CD4-positive, alpha-beta T cell (primary cell): ENCODE measurements at regions of chr1 and their contacts with region 1.

Region 1: GRCh38 chr1:65419681-65420589 is 533 bp upstream of the LEPR start:
- DNase-seq: peak; percentile 98 to 99 (median 99)
- ATAC-seq: peak; percentile 93
- H3K4me3 ChIP-seq: peak overlapping the region; percentile 86
- H3K4me3 Mint-ChIP-seq: no peak overlapping the region
- H3K27ac ChIP-seq: peak overlapping the region; percentile 64 to 69
- H3K27ac Mint-ChIP-seq: no peak overlapping the region
- H3K4me1 ChIP-seq: peaks cover 26% of the 10 kb centered on the region
- H3K4me1 Mint-ChIP-seq: peaks cover 26% of the 10 kb centered on the region
- H3K27me3 ChIP-seq: no peaks in the 10 kb centered on the region
- H3K27me3 Mint-ChIP-seq: no peaks in the 10 kb centered on the region
- CTCF ChIP-seq: no peak

Region 2: DNA sequence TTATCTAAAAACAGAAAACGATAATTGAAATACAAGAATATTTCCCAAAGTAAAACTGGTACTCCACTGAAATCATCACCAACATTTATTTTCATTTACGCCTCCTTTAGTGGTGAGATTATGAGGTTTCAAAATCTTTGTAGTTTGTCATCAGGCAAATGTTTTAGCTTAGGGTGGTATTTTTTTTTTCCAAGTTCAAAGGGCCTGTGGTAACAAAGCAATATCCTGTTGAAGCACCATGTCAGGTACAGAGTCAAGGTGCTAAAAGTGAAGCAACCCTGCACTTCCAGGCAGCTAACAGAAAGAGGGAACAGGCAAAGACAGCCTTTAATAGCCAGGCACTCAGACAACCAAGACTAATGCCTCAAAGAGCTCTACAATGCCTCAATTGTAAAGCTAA is 542.8 kb before region 1 on chr1:
- CTCF ChIA-PET with region 1: no interaction called
- POLR2A ChIA-PET with region 1: interaction called, 5 read pairs
- intact Hi-C with region 1: loop called in 1 of 2 experiments (anchors 5 kb)
- DNase-seq: peak in 10 of 14 experiments; percentile 15 to 90 (median 36)
- ATAC-seq: peak; percentile 93
- H3K4me3 ChIP-seq: no peak overlapping the region
- H3K4me3 Mint-ChIP-seq: peak overlapping the region; percentile 68
- H3K27ac ChIP-seq: peak overlapping the region in 1 of 2 donors; percentile 53
- H3K27ac Mint-ChIP-seq: peak overlapping the region; percentile 82
- H3K4me1 ChIP-seq: peaks cover 33% of the 10 kb centered on the region
- H3K4me1 Mint-ChIP-seq: peaks cover 84% of the 10 kb centered on the region
- H3K27me3 ChIP-seq: no peaks in the 10 kb centered on the region
- H3K27me3 Mint-ChIP-seq: no peaks in the 10 kb centered on the region
- CTCF ChIP-seq: no peak

Region 3: DNA sequence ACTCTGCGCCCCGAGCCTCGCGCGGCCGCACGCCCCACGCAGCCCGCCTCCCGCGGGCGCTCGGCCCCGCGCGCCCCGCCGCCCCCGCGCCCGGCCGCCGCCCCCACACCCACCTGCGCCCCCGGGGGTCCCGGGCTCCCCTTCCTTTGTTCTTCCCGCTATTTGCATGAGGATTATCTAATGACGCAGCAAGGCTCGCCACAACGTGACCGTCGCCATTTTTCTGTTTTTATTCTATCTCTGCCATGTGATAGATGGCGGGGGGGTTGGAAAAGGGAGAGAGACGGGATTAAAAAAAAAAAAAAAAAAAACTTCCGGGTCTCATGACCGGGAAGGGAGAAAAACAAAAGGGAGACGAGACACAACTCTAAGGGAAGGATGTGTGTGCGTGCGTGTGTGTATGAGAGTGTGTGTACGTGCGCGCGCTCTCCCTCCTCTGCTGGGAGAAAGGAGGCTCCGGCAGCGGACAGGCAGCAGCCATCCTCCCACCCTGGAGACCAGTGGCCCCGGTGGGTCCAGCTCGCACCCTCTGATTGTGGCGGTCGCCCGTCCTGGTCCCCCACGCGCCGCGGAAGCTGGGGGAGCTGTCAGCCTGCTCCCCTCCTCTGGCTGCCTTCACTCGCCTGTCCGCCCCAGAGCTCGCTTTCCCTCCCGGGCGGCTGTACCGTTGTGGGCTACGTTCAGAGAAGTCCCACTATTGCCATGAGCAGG is 352.3 kb before region 1 on chr1:
- CTCF ChIA-PET with region 1: no interaction called
- POLR2A ChIA-PET with region 1: interaction called, 6 read pairs
- intact Hi-C with region 1: loop called (anchors 2 to 5 kb)
- DNase-seq: peak; percentile 34 to 85 (median 60)
- ATAC-seq: peak; percentile 19
- H3K4me3 ChIP-seq: peak overlapping the region; percentile 85
- H3K4me3 Mint-ChIP-seq: peak overlapping the region; percentile 90
- H3K27ac ChIP-seq: peak overlapping the region; percentile 96 to 98
- H3K27ac Mint-ChIP-seq: peak overlapping the region; percentile 97
- H3K4me1 ChIP-seq: peaks cover 34% of the 10 kb centered on the region
- H3K4me1 Mint-ChIP-seq: peaks cover 64% of the 10 kb centered on the region
- H3K27me3 ChIP-seq: no peaks in the 10 kb centered on the region
- H3K27me3 Mint-ChIP-seq: no peaks in the 10 kb centered on the region
- CTCF ChIP-seq: no peak

Region 4: GRCh38 chr1:65254319-65255034 is 165.5 kb before region 1 on chr1:
- CTCF ChIA-PET with region 1: interaction called, 4 read pairs
- POLR2A ChIA-PET with region 1: interaction called, 24 read pairs
- intact Hi-C with region 1: loop called (anchors 2 to 5 kb)
- DNase-seq: peak; percentile 70 to 93 (median 84)
- ATAC-seq: peak; percentile 97
- H3K4me3 ChIP-seq: peak overlapping the region; percentile 65
- H3K4me3 Mint-ChIP-seq: peak overlapping the region; percentile 91
- H3K27ac ChIP-seq: no peak overlapping the region
- H3K27ac Mint-ChIP-seq: peak overlapping the region; percentile 57
- H3K4me1 ChIP-seq: peaks cover 21% of the 10 kb centered on the region
- H3K4me1 Mint-ChIP-seq: peaks cover 12% of the 10 kb centered on the region
- H3K27me3 ChIP-seq: peaks cover 3 to 5% of the 10 kb centered on the region in 2 experiments
- H3K27me3 Mint-ChIP-seq: peaks cover 15% of the 10 kb centered on the region
- CTCF ChIP-seq: no peak

Region 5: DNA sequence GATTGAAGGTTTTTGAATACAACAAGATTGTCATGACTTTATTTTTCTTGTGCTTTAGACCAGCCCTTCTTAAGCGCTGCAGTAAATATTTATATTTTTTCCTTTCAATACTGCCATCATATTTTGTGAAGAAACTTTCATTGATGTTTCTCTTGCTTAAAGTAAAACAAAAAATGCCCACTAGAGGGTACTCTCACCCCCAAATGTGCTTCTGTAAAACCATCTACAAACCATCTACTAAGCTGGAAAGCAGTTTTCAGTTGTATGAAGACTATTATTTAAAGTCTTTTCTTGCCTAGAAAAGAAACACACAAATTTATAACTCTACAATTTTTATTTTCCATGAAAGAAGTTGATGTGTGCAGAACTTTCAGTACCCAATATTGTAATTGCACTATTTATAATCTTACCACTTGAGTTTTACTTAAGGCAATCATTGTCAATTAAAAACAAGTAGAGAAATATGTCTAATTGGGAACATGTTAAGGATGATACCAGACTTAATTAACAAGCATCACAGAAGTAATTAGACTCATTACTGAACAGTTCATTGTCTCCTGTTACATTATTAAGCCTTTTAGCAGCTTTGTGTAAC is 11.3 kb after region 1 on chr1:
- CTCF ChIA-PET with region 1: interaction called, 20 read pairs
- POLR2A ChIA-PET with region 1: interaction called, 7 read pairs
- intact Hi-C with region 1: no loop called
- DNase-seq: peak in 3 of 14 experiments; percentile 34 to 50 (median 44)
- ATAC-seq: peak; percentile 62
- H3K4me3 ChIP-seq: no peak overlapping the region
- H3K4me3 Mint-ChIP-seq: no peak overlapping the region
- H3K27ac ChIP-seq: no peak overlapping the region
- H3K27ac Mint-ChIP-seq: no peak overlapping the region
- H3K4me1 ChIP-seq: no peaks in the 10 kb centered on the region
- H3K4me1 Mint-ChIP-seq: peaks cover 11% of the 10 kb centered on the region
- H3K27me3 ChIP-seq: no peaks in the 10 kb centered on the region
- H3K27me3 Mint-ChIP-seq: no peaks in the 10 kb centered on the region
- CTCF ChIP-seq: peak; percentile 83

Region 6: DNA sequence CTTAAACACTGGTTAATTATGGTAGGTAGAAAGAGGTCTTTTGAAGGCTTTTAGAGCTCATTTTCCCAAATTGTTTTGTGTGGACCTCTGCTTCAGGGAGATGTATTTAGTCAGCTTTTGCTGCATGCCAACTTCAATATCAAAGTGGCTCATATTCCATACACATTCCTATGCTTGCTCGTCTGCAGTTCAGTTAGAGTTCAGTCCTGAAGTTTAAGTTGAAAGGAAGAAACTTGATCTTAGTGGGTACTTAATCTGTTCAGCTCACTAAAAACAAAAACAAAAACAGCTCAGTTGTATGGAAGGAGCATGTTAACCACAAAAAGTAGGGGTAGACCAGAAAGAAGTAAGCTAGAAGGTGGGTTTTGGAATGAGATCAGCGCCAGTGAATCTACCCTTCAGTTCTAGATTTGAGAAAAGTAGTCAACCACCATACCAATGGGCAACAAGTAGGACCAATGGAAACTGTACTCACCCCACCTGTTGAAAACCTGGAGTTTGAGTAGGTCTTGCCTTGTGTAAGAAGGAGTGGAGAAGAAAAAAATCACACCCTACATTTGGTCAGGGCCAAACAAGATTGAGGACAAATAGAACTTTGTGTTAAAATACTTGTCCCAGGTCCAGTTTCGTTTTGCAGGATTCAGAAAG is 58.6 kb after region 1 on chr1:
- CTCF ChIA-PET with region 1: no interaction called
- POLR2A ChIA-PET with region 1: no interaction called
- intact Hi-C with region 1: no loop called
- DNase-seq: no peak
- ATAC-seq: no peak
- H3K4me3 ChIP-seq: no peak overlapping the region
- H3K4me3 Mint-ChIP-seq: no peak overlapping the region
- H3K27ac ChIP-seq: no peak overlapping the region
- H3K27ac Mint-ChIP-seq: no peak overlapping the region
- H3K4me1 ChIP-seq: no peaks in the 10 kb centered on the region
- H3K4me1 Mint-ChIP-seq: no peaks in the 10 kb centered on the region
- H3K27me3 ChIP-seq: no peaks in the 10 kb centered on the region
- H3K27me3 Mint-ChIP-seq: no peaks in the 10 kb centered on the region
- CTCF ChIP-seq: no peak

Region 7: DNA sequence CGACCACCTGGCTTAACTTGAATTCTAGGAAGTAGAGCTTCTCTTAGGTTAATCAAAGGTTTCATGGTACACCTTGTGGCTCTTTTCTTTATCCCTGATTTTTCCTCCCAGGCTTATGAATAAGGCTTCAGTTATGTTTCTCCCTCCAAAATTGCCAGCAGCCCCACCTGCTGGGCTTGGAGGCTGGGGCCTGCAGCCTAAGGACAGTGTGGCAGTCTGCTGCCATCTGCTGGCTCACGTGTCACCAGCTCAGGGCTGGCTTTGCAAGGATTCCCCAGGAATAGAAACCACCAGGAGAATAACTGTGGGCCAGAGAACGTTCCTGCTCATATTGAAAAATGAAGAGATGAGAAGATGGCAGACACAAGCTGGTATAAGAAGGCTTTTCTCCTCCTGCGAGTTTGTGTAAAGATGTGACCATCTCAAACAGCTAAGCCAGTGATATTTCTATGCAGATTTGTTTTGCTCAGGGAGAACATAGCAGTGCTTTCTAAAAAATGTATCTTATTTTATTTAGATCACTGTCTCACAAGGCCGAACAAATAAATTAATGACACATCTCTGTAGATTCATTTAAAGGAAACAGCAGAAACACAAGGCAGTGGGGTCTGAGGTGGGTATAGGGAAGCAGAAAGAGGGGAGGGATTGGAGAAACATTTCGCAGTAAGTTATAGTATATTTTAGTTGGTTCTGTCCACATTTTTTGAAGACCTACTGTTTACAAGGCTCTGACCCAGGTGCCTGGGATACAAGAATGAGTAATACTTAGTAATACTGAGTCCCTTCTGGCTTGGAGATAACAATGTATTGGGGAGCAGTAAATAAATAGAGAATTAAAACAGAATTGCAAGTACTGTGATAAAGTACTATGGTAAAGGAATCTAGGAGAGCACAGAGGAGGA is 823.0 kb after region 1 on chr1:
- CTCF ChIA-PET with region 1: no interaction called
- POLR2A ChIA-PET with region 1: no interaction called
- intact Hi-C with region 1: loop called in 1 of 2 experiments (anchors 10 kb)
- DNase-seq: peak; percentile 55 to 88 (median 68)
- ATAC-seq: peak; percentile 83
- H3K4me3 ChIP-seq: no peak overlapping the region
- H3K4me3 Mint-ChIP-seq: no peak overlapping the region
- H3K27ac ChIP-seq: no peak overlapping the region
- H3K27ac Mint-ChIP-seq: no peak overlapping the region
- H3K4me1 ChIP-seq: peaks cover 37% of the 10 kb centered on the region
- H3K4me1 Mint-ChIP-seq: peaks cover 10% of the 10 kb centered on the region
- H3K27me3 ChIP-seq: no peaks in the 10 kb centered on the region
- H3K27me3 Mint-ChIP-seq: peaks cover 7% of the 10 kb centered on the region
- CTCF ChIP-seq: peak; percentile 99

Region 8: GRCh38 chr1:66929999-66930822 is 1510.3 kb after region 1 on chr1:
- CTCF ChIA-PET with region 1: no interaction called
- POLR2A ChIA-PET with region 1: no interaction called
- intact Hi-C with region 1: loop called in 1 of 2 experiments (anchors 10 kb)
- DNase-seq: peak; percentile 88 to 98 (median 94)
- ATAC-seq: peak; percentile 66
- H3K4me3 ChIP-seq: peak overlapping the region; percentile 93
- H3K4me3 Mint-ChIP-seq: peak overlapping the region; percentile 91
- H3K27ac ChIP-seq: peak overlapping the region; percentile 87 to 88
- H3K27ac Mint-ChIP-seq: peak overlapping the region; percentile 84
- H3K4me1 ChIP-seq: peaks cover 18% of the 10 kb centered on the region
- H3K4me1 Mint-ChIP-seq: peaks cover 74% of the 10 kb centered on the region
- H3K27me3 ChIP-seq: no peaks in the 10 kb centered on the region
- H3K27me3 Mint-ChIP-seq: no peaks in the 10 kb centered on the region
- CTCF ChIP-seq: peak; percentile 52